CD4-positive, alpha-beta memory T cell (primary cell): ENCODE measurements at regions of chr6 and their contacts with region 1.

Region 1: DNA sequence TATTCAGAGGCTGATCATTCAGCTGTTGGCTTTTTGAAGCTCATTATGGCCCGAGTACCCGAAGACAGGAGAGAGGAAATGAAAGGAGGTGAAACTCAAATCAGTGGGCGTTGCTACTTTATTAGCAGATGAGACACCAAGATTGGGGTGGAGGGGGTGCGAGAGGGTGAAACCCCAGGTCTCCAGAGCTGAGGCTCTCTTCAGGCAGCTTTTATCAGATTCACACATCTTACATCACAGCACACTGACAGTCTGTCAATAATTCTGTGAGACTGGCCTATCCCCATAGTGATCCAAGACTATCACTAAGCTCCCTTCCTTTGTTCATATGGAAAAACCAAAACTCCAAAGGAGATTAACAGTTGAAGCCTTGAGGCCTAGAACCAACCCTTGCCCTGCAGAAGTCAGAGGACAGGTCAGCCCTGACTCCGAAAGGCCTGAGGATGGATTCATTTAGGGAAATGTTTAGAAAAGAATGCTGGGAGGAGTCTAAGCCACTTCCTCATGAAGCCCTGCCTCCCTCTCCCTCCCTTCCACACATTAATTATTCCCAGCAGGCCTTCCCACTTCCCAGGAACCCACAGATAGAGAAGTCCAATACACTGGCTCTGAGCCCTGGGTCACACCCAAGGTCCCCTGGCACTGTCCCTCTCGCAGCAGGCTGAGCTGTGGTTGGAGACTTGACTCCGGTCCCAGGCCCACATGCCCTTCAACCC is 23.2 kb downstream of the TRERF1 start:
- DNase-seq: peak; percentile 56 to 85 (median 62)
- H3K4me3 ChIP-seq: peak overlapping the region in 1 of 2 donors; percentile 25
- H3K4me3 Mint-ChIP-seq: peak overlapping the region; percentile 44 to 82 (median 66)
- H3K27ac ChIP-seq: peak overlapping the region; percentile 54
- H3K27ac Mint-ChIP-seq: peak overlapping the region; percentile 72 to 98 (median 93)
- H3K4me1 ChIP-seq: peaks cover 78% of the 10 kb centered on the region
- H3K4me1 Mint-ChIP-seq: peaks cover 54 to 77% (median 62%) of the 10 kb centered on the region in 4 donors
- H3K27me3 ChIP-seq: no peaks in the 10 kb centered on the region
- H3K27me3 Mint-ChIP-seq: no peaks in the 10 kb centered on the region

Region 2: DNA sequence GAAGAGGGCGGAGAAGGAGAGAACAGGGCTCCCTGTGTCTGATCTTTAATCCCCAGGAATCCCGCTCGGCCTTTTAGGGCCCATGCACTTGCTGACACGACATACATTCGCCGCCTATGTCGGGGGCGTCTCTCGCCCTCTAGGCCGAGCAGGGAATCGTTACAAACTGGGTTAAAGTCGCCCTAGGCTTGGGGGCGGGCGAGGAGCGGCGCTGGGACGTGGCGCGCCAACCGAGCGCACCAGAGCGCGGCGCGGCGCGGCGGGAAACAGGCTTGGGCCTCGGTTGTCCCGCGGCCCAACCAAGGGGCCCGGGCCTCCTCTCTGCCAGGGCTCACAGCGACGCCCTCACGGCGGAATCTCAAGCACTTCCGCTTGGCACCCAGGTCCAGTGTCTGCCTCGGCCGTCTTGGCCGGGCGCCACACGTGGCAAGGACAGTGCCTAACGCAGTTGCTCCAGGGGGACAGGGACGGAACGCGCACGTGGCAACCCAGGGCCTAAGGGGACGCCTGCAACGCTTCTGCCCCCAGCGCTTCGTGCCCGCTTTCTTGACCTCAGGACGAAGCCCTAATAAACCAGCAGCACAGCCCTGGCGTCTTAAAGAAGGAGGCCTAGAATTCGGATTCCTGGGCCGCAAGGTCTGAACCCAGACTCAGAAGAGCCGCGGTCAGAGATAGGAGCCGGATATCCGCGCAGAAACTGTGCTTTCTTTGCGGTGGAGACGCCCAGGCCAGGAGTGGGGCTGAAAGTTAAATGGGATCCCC is 1021.6 kb before region 1 on chr6:
- CTCF ChIA-PET with region 1: no interaction called
- POLR2A ChIA-PET with region 1: no interaction called
- intact Hi-C with region 1: no loop called
- DNase-seq: no peak
- H3K4me3 ChIP-seq: no peak overlapping the region
- H3K4me3 Mint-ChIP-seq: no peak overlapping the region
- H3K27ac ChIP-seq: no peak overlapping the region
- H3K27ac Mint-ChIP-seq: no peak overlapping the region
- H3K4me1 ChIP-seq: no peaks in the 10 kb centered on the region
- H3K4me1 Mint-ChIP-seq: no peaks in the 10 kb centered on the region
- H3K27me3 ChIP-seq: no peaks in the 10 kb centered on the region
- H3K27me3 Mint-ChIP-seq: peaks cover 3 to 16% of the 10 kb centered on the region in 2 donors

Region 3: DNA sequence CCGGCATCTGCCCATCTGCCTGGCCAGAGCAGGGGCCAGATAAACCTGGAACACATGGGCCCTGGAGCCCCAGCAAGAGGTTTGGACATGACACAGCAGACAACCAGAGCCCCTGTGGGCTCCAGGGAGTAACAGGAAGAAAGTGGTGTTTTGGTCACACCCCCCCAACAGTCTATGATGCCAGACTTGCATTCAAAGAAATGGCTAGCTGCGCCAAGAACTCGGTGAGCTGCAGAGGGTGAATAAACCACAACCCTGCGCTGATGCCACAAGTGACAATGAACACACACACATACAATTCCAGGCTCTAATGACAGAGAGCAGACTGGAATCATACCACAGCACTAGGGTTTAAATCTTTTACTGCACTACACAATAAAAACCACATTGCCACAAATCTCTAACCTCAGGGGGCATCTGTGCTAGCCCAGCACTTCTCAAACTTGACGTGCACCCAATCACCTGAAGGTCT is 10.8 kb before region 1 on chr6:
- CTCF ChIA-PET with region 1: interaction called, 5 read pairs
- POLR2A ChIA-PET with region 1: interaction called, 14 read pairs
- intact Hi-C with region 1: no loop called
- DNase-seq: peak; percentile 45 to 79 (median 63)
- H3K4me3 ChIP-seq: no peak overlapping the region
- H3K4me3 Mint-ChIP-seq: peak overlapping the region; percentile 37 to 76 (median 58)
- H3K27ac ChIP-seq: no peak overlapping the region
- H3K27ac Mint-ChIP-seq: peak overlapping the region; percentile 42 to 85 (median 81)
- H3K4me1 ChIP-seq: peaks cover 44% of the 10 kb centered on the region
- H3K4me1 Mint-ChIP-seq: peaks cover 43 to 81% (median 60%) of the 10 kb centered on the region in 4 donors
- H3K27me3 ChIP-seq: no peaks in the 10 kb centered on the region
- H3K27me3 Mint-ChIP-seq: no peaks in the 10 kb centered on the region

Region 4: GRCh38 chr6:42440778-42441696 is 12.6 kb after region 1 on chr6:
- CTCF ChIA-PET with region 1: interaction called, 9 read pairs
- POLR2A ChIA-PET with region 1: interaction called, 112 read pairs
- intact Hi-C with region 1: no loop called
- DNase-seq: peak in 1 of 5 donors; percentile 71
- H3K4me3 ChIP-seq: peak overlapping the region in 1 of 2 donors; percentile 11
- H3K4me3 Mint-ChIP-seq: peak overlapping the region; percentile 74 to 96 (median 82)
- H3K27ac ChIP-seq: peak overlapping the region; percentile 37
- H3K27ac Mint-ChIP-seq: peak overlapping the region; percentile 77 to 94 (median 86)
- H3K4me1 ChIP-seq: peaks cover 75% of the 10 kb centered on the region
- H3K4me1 Mint-ChIP-seq: peaks cover 45 to 83% (median 65%) of the 10 kb centered on the region in 4 donors
- H3K27me3 ChIP-seq: no peaks in the 10 kb centered on the region
- H3K27me3 Mint-ChIP-seq: no peaks in the 10 kb centered on the region